K562 (cell line): ENCODE measurements at regions of chr17 and their contacts with region 1.

Region 1: GRCh38 chr17:3907483-3908216 is 8.6 kb downstream of the P2RX1 start:
- DNase-seq: peak in 2 of 4 experiments; percentile 19 to 52
- ATAC-seq: peak; percentile 76
- H3K4me3 ChIP-seq: no peak overlapping the region
- H3K27ac ChIP-seq: no peak overlapping the region
- H3K4me1 ChIP-seq: peaks cover 0 to 30% of the 10 kb centered on the region in 2 experiments; a peak in 2 of 5 replicates
- H3K27me3 ChIP-seq: no peaks in the 10 kb centered on the region
- CTCF ChIP-seq: peak; percentile 59 to 70 (median 62)
- EP300 ChIP-seq: no peak
- POLR2A ChIP-seq: no peak
- RAD21 ChIP-seq: peak in 1 of 2 experiments; percentile 54; a peak in 2 of 4 replicates

Region 2: DNA sequence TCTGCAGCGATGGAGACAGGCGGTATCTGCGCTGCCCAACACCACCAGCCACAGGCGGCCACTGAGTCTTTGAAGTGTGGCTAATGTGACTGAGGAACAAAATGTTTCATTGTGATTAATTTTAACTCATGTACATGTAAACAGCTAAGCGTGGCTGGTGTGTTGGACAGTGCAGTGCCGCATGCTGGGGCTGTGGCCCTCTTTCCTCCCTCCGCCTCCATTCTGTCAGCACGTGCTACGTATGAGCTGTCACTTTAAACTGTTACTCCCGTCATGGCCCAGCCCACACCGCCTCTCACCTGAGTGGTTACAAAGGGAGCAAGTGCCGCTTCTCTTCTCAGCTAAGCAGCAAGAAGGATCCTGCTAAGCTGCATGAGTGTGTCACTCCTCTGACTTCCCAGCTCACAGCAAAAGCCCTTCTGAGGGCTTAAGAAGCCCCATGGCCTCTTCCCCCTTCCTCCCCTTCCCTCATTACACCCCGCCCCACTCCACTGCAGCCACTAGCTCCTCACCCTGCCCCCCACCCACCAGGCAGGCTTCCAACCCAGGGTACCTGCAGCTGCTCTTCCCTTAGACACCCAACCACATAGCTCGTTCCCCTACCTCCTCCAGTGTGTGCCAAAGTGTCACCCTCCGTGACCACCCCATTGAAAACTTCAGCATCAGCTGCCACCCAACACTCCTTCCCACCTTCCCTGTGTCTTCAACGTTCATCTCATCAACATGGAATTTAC is 168.9 kb before region 1 on chr17:
- CTCF ChIA-PET with region 1: interaction called, 3 read pairs
- POLR2A ChIA-PET with region 1: interaction called, 3 read pairs
- in situ Hi-C with region 1: no loop called
- intact Hi-C with region 1: loop called (anchors 10 kb)
- DNase-seq: peak in 3 of 4 experiments; percentile 28 to 39 (median 33)
- ATAC-seq: peak; percentile 69
- H3K4me3 ChIP-seq: no peak overlapping the region
- H3K27ac ChIP-seq: no peak overlapping the region
- H3K4me1 ChIP-seq: peaks cover 4 to 10% of the 10 kb centered on the region in 2 experiments; a peak in 2 of 5 replicates
- H3K27me3 ChIP-seq: peaks cover 0 to 6% of the 10 kb centered on the region in 2 experiments; a peak in 2 of 5 replicates
- CTCF ChIP-seq: no peak
- EP300 ChIP-seq: no peak
- POLR2A ChIP-seq: no peak
- RAD21 ChIP-seq: no peak

Region 3: GRCh38 chr17:3845621-3846441 is 61.8 kb before region 1 on chr17 and contains the start of gene NCBP3:
- CTCF ChIA-PET with region 1: interaction called, 4 read pairs
- POLR2A ChIA-PET with region 1: no interaction called
- in situ Hi-C with region 1: no loop called
- intact Hi-C with region 1: loop called (anchors 10 kb)
- DNase-seq: peak; percentile 90 to 92 (median 92)
- ATAC-seq: peak; percentile 97
- H3K4me3 ChIP-seq: peak within 1 kb of the TSS; percentile 99
- H3K27ac ChIP-seq: peak within 1 kb of the TSS; percentile 83
- H3K4me1 ChIP-seq: peaks cover 2 to 8% of the 10 kb centered on the region in 2 experiments; a peak in 4 of 5 replicates
- H3K27me3 ChIP-seq: 0 out of 5 replicates have a peak, but pooled peaks cover 0 to 2% of the 10 kb centered on the region in 2 experiments
- CTCF ChIP-seq: peak; percentile 79 to 89 (median 86)
- EP300 ChIP-seq: peak; percentile 51; the same call in 1 of the 2 replicates
- POLR2A ChIP-seq: peak; percentile 89
- RAD21 ChIP-seq: no peak
- polyA plus RNA-seq, gene NCBP3: 3.1 to 5.8 TPM

Region 4: DNA sequence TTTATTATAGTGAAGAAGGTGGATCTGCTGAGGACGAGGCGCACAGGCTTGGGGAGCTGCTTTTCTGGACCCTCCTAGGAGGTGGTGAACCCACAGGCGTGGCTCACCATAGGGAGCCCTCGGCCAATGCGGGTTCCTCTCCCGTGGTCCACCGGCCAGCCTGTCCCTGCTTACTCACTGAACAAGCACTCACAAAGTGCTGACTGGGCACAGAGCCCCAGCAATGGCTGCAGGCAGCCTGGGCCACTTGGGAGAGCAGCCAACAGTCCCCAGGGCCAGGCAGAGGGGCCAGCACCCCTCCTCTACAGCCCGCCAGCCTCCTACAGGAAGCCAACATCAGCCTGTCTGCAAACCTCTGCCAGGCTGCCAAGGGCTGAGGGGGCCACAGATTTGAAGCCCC is 42.5 kb before region 1 on chr17:
- CTCF ChIA-PET with region 1: interaction called, 14 read pairs
- POLR2A ChIA-PET with region 1: no interaction called
- in situ Hi-C with region 1: no loop called
- intact Hi-C with region 1: loop called (anchors 1 kb)
- DNase-seq: no peak
- ATAC-seq: no peak
- H3K4me3 ChIP-seq: no peak overlapping the region
- H3K27ac ChIP-seq: no peak overlapping the region
- H3K4me1 ChIP-seq: peaks cover 0 to 13% of the 10 kb centered on the region in 2 experiments; a peak in 2 of 5 replicates
- H3K27me3 ChIP-seq: no peaks in the 10 kb centered on the region
- CTCF ChIP-seq: no peak
- EP300 ChIP-seq: no peak
- POLR2A ChIP-seq: no peak
- RAD21 ChIP-seq: no peak

Region 5: GRCh38 chr17:4143563-4144421 is 236.1 kb after region 1 on chr17:
- CTCF ChIA-PET with region 1: no interaction called
- POLR2A ChIA-PET with region 1: no interaction called
- in situ Hi-C with region 1: no loop called
- intact Hi-C with region 1: no loop called
- DNase-seq: peak; percentile 72 to 92 (median 79)
- ATAC-seq: peak; percentile 89
- H3K4me3 ChIP-seq: peak overlapping the region; percentile 98
- H3K27ac ChIP-seq: peak overlapping the region; percentile 94
- H3K4me1 ChIP-seq: peaks cover 3 to 10% of the 10 kb centered on the region in 2 experiments; a peak in 3 of 5 replicates
- H3K27me3 ChIP-seq: no peaks in the 10 kb centered on the region
- CTCF ChIP-seq: no peak
- EP300 ChIP-seq: no peak
- POLR2A ChIP-seq: peak; percentile 80
- RAD21 ChIP-seq: no peak